ENCODE measurements at regions of chr6 and their contacts with region 1.

Region 1: DNA sequence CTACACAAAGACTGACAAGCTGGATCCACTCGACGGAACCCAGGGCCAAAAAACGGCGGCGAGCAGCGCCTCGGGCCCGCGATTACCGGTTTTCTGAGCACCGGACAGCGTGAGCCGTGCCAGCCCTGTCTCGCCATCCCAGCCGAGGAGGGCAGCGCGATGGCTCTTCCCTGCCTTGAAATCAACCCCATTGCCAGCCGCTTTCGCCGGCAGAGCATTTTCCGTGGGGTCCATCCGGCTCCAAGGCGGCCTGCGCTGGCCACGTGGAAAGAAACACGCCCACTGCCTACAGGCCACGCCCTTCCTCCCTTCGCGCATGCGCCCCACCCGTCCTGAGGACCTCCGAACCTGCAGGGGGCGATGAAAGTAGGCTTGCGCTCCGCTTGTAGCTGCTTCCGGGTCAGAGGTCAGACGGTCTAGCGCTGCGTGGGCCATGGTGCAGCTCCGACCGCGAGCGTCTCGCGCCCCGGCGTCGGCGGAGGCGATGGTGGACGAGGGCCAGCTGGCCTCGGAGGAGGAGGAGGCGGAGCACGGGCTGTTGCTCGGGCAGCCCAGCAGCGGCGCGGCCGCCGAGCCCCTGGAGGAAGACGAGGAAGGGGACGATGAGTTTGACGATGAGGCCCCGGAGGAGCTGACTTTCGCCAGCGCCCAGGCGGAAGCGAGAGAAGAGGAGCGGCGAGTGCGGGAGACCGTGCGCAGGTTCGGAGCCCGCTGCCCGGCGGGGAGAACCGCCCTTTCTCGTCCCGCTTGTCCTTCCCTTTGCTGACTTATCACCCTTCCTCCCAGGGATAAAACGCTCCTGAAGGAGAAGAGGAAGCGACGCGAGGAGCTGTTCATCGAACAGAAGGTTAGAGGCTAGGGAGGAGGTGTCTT is at the start of gene NOL7:
- DNase-seq: peak; percentile 97
- H3K4me3 Mint-ChIP-seq: peak within 1 kb of the TSS; percentile 99
- H3K27ac Mint-ChIP-seq: peak within 1 kb of the TSS; percentile 98
- H3K4me1 Mint-ChIP-seq: peaks cover 9% of the 10 kb centered on the region
- H3K27me3 Mint-ChIP-seq: no peaks in the 10 kb centered on the region
- CTCF ChIP-seq: peak; percentile 72
- total RNA-seq, gene NOL7: 75.2 and 98.5 TPM in 2 replicates

Region 2: GRCh38 chr6:13328076-13328874 is 286.9 kb before region 1 on chr6 and contains the start of gene TBC1D7:
- CTCF ChIA-PET with region 1: interaction called, 4 read pairs
- POLR2A ChIA-PET with region 1: interaction called, 30 read pairs
- intact Hi-C with region 1: no loop called
- DNase-seq: peak; percentile 92
- H3K4me3 Mint-ChIP-seq: peak within 1 kb of the TSS; percentile 88
- H3K27ac Mint-ChIP-seq: peak within 1 kb of the TSS; percentile 79
- H3K4me1 Mint-ChIP-seq: no peaks in the 10 kb centered on the region
- H3K27me3 Mint-ChIP-seq: no peaks in the 10 kb centered on the region
- CTCF ChIP-seq: no peak
- total RNA-seq, gene TBC1D7: 19.5 and 28.5 TPM in 2 replicates

Region 3: GRCh38 chr6:13383328-13384163 is 231.6 kb before region 1 on chr6:
- CTCF ChIA-PET with region 1: interaction called, 4 read pairs
- POLR2A ChIA-PET with region 1: interaction called, 10 read pairs
- intact Hi-C with region 1: no loop called
- DNase-seq: peak; percentile 55
- H3K4me3 Mint-ChIP-seq: peak overlapping the region; percentile 32
- H3K27ac Mint-ChIP-seq: peak overlapping the region; percentile 59
- H3K4me1 Mint-ChIP-seq: peaks cover 10% of the 10 kb centered on the region
- H3K27me3 Mint-ChIP-seq: no peaks in the 10 kb centered on the region
- CTCF ChIP-seq: peak; percentile 23

Region 4: GRCh38 chr6:13574149-13574570 is 41.0 kb before region 1 on chr6:
- CTCF ChIA-PET with region 1: interaction called, 23 read pairs
- POLR2A ChIA-PET with region 1: interaction called, 85 read pairs
- intact Hi-C with region 1: loop called (anchors 1 kb)
- DNase-seq: peak; percentile 94
- H3K4me3 Mint-ChIP-seq: peak overlapping the region; percentile 94
- H3K27ac Mint-ChIP-seq: peak overlapping the region; percentile 84
- H3K4me1 Mint-ChIP-seq: peaks cover 5% of the 10 kb centered on the region
- H3K27me3 Mint-ChIP-seq: no peaks in the 10 kb centered on the region
- CTCF ChIP-seq: peak; percentile 40

Region 5: DNA sequence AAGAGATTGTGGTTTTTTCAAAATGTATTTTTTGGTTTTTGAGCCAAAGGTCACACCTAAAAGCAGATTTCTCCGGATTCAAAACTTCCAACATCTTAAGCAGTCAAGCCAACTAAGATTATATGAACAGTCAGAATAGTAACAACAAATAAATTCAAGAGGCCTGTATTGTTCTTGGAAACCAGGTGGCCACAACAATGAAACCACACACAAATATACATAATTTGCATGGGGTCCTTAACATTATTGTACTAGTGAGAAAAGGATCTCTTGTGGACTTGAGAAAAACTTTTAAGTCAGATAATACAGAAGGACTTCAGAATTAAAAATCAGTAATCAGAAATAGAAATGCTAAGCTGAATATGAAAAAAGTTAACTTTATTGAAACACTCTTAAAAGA is 40.5 kb after region 1 on chr6:
- CTCF ChIA-PET with region 1: no interaction called
- POLR2A ChIA-PET with region 1: interaction called, 10 read pairs
- intact Hi-C with region 1: no loop called
- DNase-seq: no peak
- H3K4me3 Mint-ChIP-seq: no peak overlapping the region
- H3K27ac Mint-ChIP-seq: no peak overlapping the region
- H3K4me1 Mint-ChIP-seq: no peaks in the 10 kb centered on the region
- H3K27me3 Mint-ChIP-seq: no peaks in the 10 kb centered on the region
- CTCF ChIP-seq: no peak

Region 6: DNA sequence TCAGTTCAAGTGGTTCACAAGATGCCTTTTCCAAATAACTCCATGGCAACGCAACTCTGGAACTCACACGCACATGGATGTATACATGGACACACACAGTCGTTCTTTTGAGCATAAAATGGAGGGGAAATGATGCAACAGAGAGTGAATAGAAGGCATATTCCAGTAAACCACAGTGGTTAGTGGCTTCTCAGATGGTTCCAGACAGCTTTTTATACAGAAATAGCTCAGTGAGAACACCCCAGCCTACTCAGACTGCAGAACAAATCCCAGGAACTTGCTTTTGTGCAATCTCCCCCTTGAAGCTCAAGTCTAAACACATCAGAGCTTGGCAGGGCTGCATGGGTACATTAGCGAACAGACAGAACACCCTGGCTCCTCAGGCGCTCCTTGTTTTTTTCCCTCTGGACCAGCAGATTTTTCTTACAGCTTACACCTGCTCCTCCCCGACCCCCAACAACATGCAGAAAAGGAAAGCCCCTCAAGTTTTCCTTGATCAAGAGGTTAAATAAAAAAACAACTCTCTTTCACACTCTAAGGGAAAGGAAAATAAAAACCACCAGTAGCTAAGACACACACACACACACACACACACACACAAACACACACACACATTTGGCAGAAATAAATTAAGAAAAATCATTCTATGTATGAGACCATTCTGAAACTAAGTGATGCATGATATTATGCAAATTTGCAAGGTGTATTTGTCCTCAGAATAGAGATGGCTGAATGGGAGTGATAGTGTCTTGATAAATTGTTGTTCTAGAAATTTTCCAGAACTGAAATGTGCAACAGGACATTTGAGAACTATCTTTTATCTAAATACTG is 147.7 kb after region 1 on chr6:
- CTCF ChIA-PET with region 1: interaction called, 3 read pairs
- POLR2A ChIA-PET with region 1: interaction called, 10 read pairs
- intact Hi-C with region 1: no loop called
- DNase-seq: peak; percentile 91
- H3K4me3 Mint-ChIP-seq: peak overlapping the region; percentile 11
- H3K27ac Mint-ChIP-seq: peak overlapping the region; percentile 86
- H3K4me1 Mint-ChIP-seq: peaks cover 42% of the 10 kb centered on the region
- H3K27me3 Mint-ChIP-seq: no peaks in the 10 kb centered on the region
- CTCF ChIP-seq: no peak

Region 7: DNA sequence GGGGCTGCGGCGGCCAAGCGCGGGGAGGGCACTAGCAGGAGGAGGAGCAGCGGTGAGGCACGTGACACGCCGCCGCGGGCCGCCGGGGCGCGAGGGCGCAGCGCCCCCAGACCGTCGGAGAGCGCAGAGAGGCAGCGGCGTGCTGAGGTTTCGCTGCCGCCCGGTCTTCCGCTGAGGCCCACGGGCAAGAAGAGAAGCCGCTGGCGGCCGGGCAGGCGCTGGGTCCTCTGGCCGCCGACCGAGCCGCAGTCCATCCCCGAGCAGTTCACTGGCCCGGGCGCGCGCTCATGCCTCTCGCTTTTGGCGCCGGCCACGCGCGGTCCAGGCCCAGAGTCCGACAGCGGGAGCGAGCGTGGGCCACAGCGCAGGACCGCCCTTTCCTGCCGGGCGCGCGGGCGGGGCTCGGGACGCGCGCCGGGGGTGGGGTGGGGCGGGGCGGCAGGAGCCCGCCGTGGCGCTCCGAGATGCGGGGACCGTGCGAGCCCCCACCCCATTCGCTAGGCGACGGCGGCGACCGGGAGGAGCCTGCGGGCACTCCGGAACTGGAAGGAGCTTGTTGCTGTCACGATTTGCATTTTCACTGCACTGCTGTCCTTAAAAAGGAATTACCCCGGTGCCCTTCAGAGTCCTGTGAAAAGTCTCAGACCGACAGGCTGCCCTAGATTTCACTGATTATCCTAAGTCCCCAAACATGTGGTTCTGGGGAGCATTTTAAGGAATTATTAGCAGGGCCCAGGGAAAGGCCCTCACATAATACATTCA is 199.2 kb after region 1 on chr6 and contains the start of gene MCUR1:
- CTCF ChIA-PET with region 1: interaction called, 3 read pairs
- POLR2A ChIA-PET with region 1: interaction called, 23 read pairs
- intact Hi-C with region 1: no loop called
- DNase-seq: peak; percentile 85
- H3K4me3 Mint-ChIP-seq: peak within 1 kb of the TSS; percentile 84
- H3K27ac Mint-ChIP-seq: peak within 1 kb of the TSS; percentile 78
- H3K4me1 Mint-ChIP-seq: peaks cover 35% of the 10 kb centered on the region
- H3K27me3 Mint-ChIP-seq: no peaks in the 10 kb centered on the region
- CTCF ChIP-seq: no peak
- total RNA-seq, gene MCUR1: 26.8 and 30.4 TPM in 2 replicates

Measured in MCF 10A (cell line).